Gastrocnemius medialis (tissue), 4 donors: ENCODE measurements at regions of chr21 and their contacts with region 1.

Region 1: DNA sequence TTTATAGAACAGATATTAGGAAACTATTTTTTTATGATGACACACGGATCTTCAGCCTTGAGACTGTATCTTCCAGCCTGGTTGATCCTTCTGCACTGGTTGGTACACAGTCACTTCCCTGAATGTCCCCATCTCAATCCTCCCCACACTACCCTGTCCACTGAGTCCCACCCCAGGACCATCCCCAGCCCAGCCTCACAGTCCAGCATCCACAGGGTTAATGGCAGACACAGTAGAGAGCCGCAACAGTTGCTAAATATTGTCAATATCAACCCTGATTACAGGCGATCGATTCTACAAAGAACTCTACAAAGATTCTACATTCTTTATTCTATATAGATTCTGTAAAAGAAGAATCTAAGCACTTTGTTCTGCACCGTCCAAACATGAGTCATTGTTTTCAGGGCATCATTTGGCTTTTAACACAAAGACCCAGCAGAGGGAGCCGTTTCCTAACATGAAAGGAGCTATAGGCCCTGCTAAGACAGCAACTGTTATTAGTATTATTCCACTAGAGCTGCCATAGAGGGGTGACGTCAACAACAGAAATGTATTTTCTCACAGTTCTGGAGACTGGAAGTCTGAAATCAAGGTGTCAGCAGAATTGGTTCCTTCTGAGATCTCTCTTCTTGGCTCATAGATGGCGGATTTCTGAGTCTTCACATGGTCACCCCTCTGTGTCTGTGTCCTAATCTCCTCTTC is 30.1 kb upstream of the IFNAR2 start:
- DNase-seq: peak; percentile 71 to 75
- ATAC-seq: peak; percentile 91 to 92
- H3K4me3 ChIP-seq: no peak overlapping the region
- H3K27ac ChIP-seq: peak overlapping the region; percentile 45 to 78 (median 70)
- H3K4me1 ChIP-seq: peaks cover 35 to 39% of the 10 kb centered on the region in 2 donors
- H3K27me3 ChIP-seq: no peaks in the 10 kb centered on the region
- CTCF ChIP-seq: peak; percentile 60 to 86 (median 77)
- POLR2A ChIP-seq: no peak

Region 2: DNA sequence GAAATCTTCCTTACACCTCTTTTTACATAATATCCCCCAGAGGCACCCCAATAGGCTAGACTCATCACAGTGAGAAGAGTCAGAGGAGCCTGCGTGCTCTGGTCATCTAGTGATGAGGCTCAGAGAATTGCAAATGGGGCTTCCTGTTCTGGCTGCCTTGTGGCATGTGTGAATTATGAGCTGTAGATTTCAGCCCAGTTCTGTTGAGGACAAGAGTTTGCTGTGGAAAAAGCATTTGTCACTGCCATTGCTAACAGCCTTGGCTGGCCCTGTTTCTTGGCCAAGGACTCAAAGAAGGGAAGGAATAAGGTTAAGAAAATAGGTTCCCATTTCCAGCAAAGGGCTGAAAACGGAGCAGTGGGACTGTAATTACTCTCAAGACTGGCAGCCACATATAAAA is 870.3 kb before region 1 on chr21:
- in situ Hi-C with region 1: no loop called
- intact Hi-C with region 1: no loop called
- DNase-seq: no peak
- ATAC-seq: no peak
- H3K4me3 ChIP-seq: no peak overlapping the region
- H3K27ac ChIP-seq: peak overlapping the region; percentile 3 to 66 (median 47)
- H3K4me1 ChIP-seq: peaks cover 8 to 13% of the 10 kb centered on the region in 2 donors
- H3K27me3 ChIP-seq: no peaks in the 10 kb centered on the region
- CTCF ChIP-seq: no peak
- POLR2A ChIP-seq: no peak

Region 3: DNA sequence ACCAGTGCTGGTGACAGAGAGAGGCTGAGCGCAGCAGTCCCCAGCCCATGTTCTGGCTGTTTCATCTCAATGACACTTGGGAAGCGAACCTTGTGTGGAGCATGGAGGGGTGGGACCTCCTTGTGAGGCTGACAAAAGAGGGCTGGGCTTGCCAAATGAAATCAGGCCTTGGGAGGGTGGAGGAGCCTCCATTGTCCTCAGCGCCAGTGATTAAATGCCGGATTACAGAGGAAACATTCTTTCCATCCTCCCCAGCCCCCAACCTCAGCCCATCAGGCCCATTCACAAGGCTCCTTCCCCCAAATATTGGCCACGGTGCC is 364.8 kb before region 1 on chr21:
- in situ Hi-C with region 1: loop called in 2 of 4 experiments (anchors 10 kb)
- intact Hi-C with region 1: no loop called
- DNase-seq: no peak
- ATAC-seq: no peak
- H3K4me3 ChIP-seq: no peak overlapping the region
- H3K27ac ChIP-seq: no peak overlapping the region
- H3K4me1 ChIP-seq: no peaks in the 10 kb centered on the region
- H3K27me3 ChIP-seq: peaks cover 0 to 4% (median 0%) of the 10 kb centered on the region in 3 donors
- CTCF ChIP-seq: no peak
- POLR2A ChIP-seq: no peak

Region 4: DNA sequence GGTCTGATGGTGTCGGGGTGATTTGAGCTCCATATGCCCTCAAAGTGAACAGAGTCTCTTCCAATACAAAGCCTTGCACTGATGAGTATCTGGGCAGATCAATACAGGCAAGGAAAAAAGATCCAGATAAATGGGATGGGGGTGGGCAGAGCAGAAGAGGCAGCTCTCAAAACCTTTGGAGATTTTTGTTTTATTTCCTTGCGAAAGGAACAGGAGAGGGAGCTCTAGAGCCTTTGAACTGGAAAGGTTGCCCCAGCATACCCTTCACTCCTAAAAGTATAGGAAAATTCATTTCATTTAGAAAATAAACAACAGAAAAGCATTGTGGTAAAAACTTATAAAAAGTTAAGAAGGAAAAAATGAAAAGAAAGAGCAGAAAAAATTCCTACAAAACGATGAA is 205.4 kb before region 1 on chr21:
- in situ Hi-C with region 1: no loop called
- intact Hi-C with region 1: loop called (anchors 5 kb)
- DNase-seq: no peak
- ATAC-seq: no peak
- H3K4me3 ChIP-seq: no peak overlapping the region
- H3K27ac ChIP-seq: no peak overlapping the region
- H3K4me1 ChIP-seq: no peaks in the 10 kb centered on the region
- H3K27me3 ChIP-seq: peaks cover 0 to 21% (median 6%) of the 10 kb centered on the region in 3 donors
- CTCF ChIP-seq: peak in 3 of 5 experiments; percentile 25 to 42 (median 40)
- POLR2A ChIP-seq: no peak

Region 5: GRCh38 chr21:33360881-33361602 is 161.4 kb after region 1 on chr21:
- in situ Hi-C with region 1: loop called in 3 of 4 experiments (anchors 10 kb)
- intact Hi-C with region 1: loop called (anchors 1 kb)
- DNase-seq: peak; percentile 27 to 66
- ATAC-seq: peak; percentile 82 to 95
- H3K4me3 ChIP-seq: peak overlapping the region; percentile 5 to 48 (median 26)
- H3K27ac ChIP-seq: peak overlapping the region; percentile 7 to 51 (median 30)
- H3K4me1 ChIP-seq: peaks cover 14 to 20% of the 10 kb centered on the region in 2 donors
- H3K27me3 ChIP-seq: no peaks in the 10 kb centered on the region
- CTCF ChIP-seq: peak; percentile 75 to 88 (median 84)
- POLR2A ChIP-seq: no peak

Region 6: DNA sequence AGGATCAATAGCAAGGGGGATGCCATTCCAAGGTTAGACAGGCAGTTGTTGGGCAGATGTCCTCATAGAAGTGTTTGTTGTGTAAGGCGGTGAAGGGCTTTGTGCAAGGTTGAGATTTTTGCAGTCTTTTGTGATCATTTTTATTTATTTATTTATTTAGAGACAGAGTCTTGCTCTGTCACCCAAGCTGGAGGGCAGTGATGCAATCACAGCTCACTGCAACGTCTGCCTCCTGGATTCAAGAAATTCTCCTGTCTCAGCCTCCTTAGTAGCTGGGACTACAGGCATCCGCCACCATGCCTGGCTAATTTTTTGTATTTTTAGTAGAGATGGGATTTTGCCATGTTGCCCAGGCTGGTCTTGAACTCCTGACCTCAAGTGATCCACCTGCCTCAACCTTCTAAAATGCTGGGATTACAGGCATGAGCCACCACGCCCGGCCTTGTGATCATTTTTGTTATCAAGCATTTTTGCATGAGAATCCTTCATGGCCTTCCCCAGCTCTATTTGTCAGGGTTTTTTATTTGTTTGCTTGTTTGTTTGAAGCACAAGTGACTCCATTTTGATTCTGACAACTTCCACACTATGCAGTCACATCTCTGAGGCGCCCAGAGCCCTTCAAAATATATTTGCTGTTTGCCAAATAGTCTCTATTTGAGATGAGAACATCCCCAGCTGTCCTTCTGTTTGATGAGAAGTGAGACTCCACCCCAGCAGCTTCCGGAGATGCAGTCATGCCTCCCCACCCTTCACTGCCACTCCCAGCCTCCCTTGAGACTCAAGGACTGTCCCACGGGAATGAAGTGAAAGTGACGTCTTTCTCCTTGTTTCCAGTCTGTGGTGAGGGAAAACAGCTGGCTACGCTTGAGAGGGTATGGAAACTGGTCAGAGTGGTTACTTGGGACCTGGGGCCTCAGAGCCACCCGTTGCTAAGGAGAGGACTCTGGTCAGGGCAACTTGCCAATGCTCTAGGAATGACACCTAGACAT is 242.1 kb after region 1 on chr21:
- in situ Hi-C with region 1: loop called (anchors 5 to 10 kb)
- intact Hi-C with region 1: loop called (anchors 1 kb)
- DNase-seq: peak in 1 of 2 donors; percentile 41
- ATAC-seq: peak in 1 of 2 donors; percentile 34
- H3K4me3 ChIP-seq: no peak overlapping the region
- H3K27ac ChIP-seq: peak overlapping the region in 2 of 4 donors; percentile 29 to 34
- H3K4me1 ChIP-seq: peaks cover 0 to 3% of the 10 kb centered on the region in 2 donors
- H3K27me3 ChIP-seq: no peaks in the 10 kb centered on the region
- CTCF ChIP-seq: no peak
- POLR2A ChIP-seq: no peak

Region 7: GRCh38 chr21:33608559-33608958 is 408.9 kb after region 1 on chr21:
- in situ Hi-C with region 1: no loop called
- intact Hi-C with region 1: loop called (anchors 5 kb)
- DNase-seq: no peak
- ATAC-seq: no peak
- H3K4me3 ChIP-seq: no peak overlapping the region
- H3K27ac ChIP-seq: no peak overlapping the region
- H3K4me1 ChIP-seq: peaks cover 10 to 13% of the 10 kb centered on the region in 2 donors
- H3K27me3 ChIP-seq: no peaks in the 10 kb centered on the region
- CTCF ChIP-seq: no peak
- POLR2A ChIP-seq: no peak